Naive thymus-derived CD4-positive, alpha-beta T cell (primary cell): ENCODE measurements at regions of chr5 and their contacts with region 1.

Region 1: DNA sequence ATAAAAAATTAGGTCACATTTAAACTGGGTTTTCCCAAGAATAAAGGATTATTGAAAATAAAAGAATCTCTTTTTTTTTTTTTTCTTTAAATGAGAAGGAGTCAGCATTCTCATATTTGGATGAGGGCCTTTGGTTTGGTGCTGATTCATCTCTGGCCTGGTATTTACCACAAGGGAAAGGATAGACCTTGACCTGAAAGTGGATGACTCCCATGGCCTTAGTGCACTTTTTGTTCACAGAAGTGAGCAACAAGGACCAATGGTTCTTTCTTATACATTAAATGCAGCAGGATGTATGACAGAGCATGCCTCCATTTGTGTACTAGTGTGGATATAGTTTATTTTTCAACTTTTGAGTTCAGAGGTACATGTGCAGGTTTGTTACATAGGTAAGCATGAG is 6.9 kb downstream of the YTHDC2 start:
- DNase-seq: no peak
- ATAC-seq: no peak
- H3K4me3 ChIP-seq: no peak overlapping the region
- H3K4me3 Mint-ChIP-seq: peak overlapping the region in 2 of 10 donors; percentile 13 to 51
- H3K27ac ChIP-seq: no peak overlapping the region
- H3K27ac Mint-ChIP-seq: peak overlapping the region in 2 of 9 donors; percentile 24 to 56
- H3K4me1 ChIP-seq: peaks cover 7 to 15% of the 10 kb centered on the region in 2 donors
- H3K4me1 Mint-ChIP-seq: peaks cover 30 to 86% (median 73%) of the 10 kb centered on the region in 7 donors
- H3K27me3 ChIP-seq: no peaks in the 10 kb centered on the region
- H3K27me3 Mint-ChIP-seq: no peaks in the 10 kb centered on the region

Region 2: DNA sequence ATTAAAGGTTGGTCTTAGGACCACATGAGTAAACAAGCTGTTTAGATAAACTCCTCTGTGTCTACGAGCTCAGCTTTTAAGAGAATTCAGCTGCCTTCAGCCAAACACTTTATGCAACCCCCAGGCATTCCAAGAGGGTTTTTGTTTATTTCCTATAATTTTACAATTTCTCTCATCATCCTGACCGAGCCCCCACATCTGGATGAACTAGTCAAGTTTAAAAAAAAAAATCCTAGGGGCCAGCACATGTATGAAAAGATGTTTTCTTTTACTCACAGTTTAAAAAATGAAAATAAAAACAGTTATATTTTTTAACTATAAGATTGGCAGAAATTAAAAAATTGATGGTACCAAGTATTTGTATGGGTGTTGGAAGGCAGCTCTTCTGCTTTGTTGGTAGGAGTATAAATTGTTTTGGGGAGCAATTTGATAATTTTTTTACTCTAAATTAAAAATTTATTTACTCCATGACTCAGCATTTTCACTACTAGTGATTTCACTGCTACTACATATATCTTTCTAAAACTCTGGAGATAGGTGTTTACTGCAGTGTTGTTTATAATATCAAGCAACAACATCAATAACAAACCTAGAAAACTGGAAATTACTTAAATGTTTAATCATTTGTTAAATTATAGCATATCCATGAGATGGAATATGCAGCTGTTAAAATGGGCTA is 11.2 kb after region 1 on chr5:
- CTCF ChIA-PET with region 1: no interaction called
- POLR2A ChIA-PET with region 1: no interaction called
- intact Hi-C with region 1: no loop called
- DNase-seq: no peak
- ATAC-seq: no peak
- H3K4me3 ChIP-seq: no peak overlapping the region
- H3K4me3 Mint-ChIP-seq: no peak overlapping the region
- H3K27ac ChIP-seq: no peak overlapping the region
- H3K27ac Mint-ChIP-seq: no peak overlapping the region
- H3K4me1 ChIP-seq: no peaks in the 10 kb centered on the region
- H3K4me1 Mint-ChIP-seq: peaks cover 0 to 11% (median 0%) of the 10 kb centered on the region in 7 donors
- H3K27me3 ChIP-seq: no peaks in the 10 kb centered on the region
- H3K27me3 Mint-ChIP-seq: no peaks in the 10 kb centered on the region

Region 3: GRCh38 chr5:113581388-113581787 is 61.0 kb after region 1 on chr5:
- CTCF ChIA-PET with region 1: no interaction called
- POLR2A ChIA-PET with region 1: no interaction called
- intact Hi-C with region 1: loop called in 1 of 2 experiments (anchors 5 kb)
- DNase-seq: no peak
- ATAC-seq: no peak
- H3K4me3 ChIP-seq: no peak overlapping the region
- H3K4me3 Mint-ChIP-seq: no peak overlapping the region
- H3K27ac ChIP-seq: no peak overlapping the region
- H3K27ac Mint-ChIP-seq: no peak overlapping the region
- H3K4me1 ChIP-seq: no peaks in the 10 kb centered on the region
- H3K4me1 Mint-ChIP-seq: peaks cover 0 to 13% (median 0%) of the 10 kb centered on the region in 7 donors
- H3K27me3 ChIP-seq: no peaks in the 10 kb centered on the region
- H3K27me3 Mint-ChIP-seq: no peaks in the 10 kb centered on the region

Region 4: GRCh38 chr5:113598926-113599325 is 78.5 kb after region 1 on chr5:
- CTCF ChIA-PET with region 1: no interaction called
- POLR2A ChIA-PET with region 1: no interaction called
- intact Hi-C with region 1: loop called in 1 of 2 experiments (anchors 5 kb)
- DNase-seq: no peak
- ATAC-seq: no peak
- H3K4me3 ChIP-seq: no peak overlapping the region
- H3K4me3 Mint-ChIP-seq: no peak overlapping the region
- H3K27ac ChIP-seq: no peak overlapping the region
- H3K27ac Mint-ChIP-seq: peak overlapping the region in 1 of 9 donors; percentile 25
- H3K4me1 ChIP-seq: no peaks in the 10 kb centered on the region
- H3K4me1 Mint-ChIP-seq: no peaks in the 10 kb centered on the region
- H3K27me3 ChIP-seq: no peaks in the 10 kb centered on the region
- H3K27me3 Mint-ChIP-seq: peaks cover 0 to 16% (median 0%) of the 10 kb centered on the region in 5 donors